K562 (cell line): ENCODE measurements at regions of chr10 and their contacts with region 1.

Region 1: GRCh38 chr10:112471878-112472487 is 25.0 kb downstream of the VTI1A start:
- DNase-seq: peak; percentile 26 to 47 (median 32)
- ATAC-seq: peak; percentile 74
- H3K4me3 ChIP-seq: no peak overlapping the region
- H3K27ac ChIP-seq: no peak overlapping the region
- H3K4me1 ChIP-seq: no peaks in the 10 kb centered on the region
- H3K27me3 ChIP-seq: no peaks in the 10 kb centered on the region
- CTCF ChIP-seq: peak; percentile 31 to 64 (median 47); a peak in 4 of 6 replicates
- EP300 ChIP-seq: no peak
- POLR2A ChIP-seq: no peak
- RAD21 ChIP-seq: peak; percentile 44 to 77; a peak in 3 of 4 replicates

Region 2: GRCh38 chr10:112314822-112315474 is 157.0 kb before region 1 on chr10:
- CTCF ChIA-PET with region 1: no interaction called
- POLR2A ChIA-PET with region 1: no interaction called
- in situ Hi-C with region 1: no loop called
- intact Hi-C with region 1: loop called (anchors 2 kb)
- DNase-seq: peak; percentile 60 to 74 (median 65)
- ATAC-seq: peak; percentile 96
- H3K4me3 ChIP-seq: no peak overlapping the region
- H3K27ac ChIP-seq: no peak overlapping the region
- H3K4me1 ChIP-seq: peaks cover 0 to 3% of the 10 kb centered on the region in 2 experiments; a peak in 1 of 5 replicates
- H3K27me3 ChIP-seq: peaks cover 8 to 19% of the 10 kb centered on the region in 2 experiments
- CTCF ChIP-seq: peak; percentile 65 to 81 (median 73)
- EP300 ChIP-seq: no peak
- POLR2A ChIP-seq: no peak
- RAD21 ChIP-seq: peak; percentile 55 to 78

Region 3: DNA sequence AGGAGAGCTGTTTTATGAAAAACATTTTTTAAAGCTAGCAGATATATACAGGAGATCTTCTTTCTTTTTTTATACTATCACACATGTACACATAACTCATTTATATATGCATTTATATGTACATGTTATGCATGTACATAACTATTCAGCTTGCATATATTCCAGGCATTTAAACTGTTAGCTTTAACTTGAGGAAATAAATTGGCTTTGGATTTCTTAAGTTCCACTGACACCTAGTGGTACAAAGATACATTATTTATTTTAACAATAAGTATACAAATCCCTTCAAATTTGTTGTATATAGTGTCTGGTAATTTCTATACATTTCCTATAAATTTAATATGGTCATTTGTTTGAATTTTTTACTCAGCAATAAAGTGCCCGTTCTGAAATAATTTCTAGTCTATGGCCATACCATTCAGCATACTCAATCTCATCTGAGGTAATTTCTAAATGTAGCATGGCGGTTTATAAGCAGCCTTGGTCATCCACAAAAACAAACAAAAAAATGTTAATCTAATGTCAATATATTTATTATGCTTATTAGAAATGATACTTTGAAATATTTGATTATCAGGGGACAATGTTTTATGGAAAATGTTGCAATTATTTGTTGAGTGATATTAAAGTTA is 36.9 kb before region 1 on chr10:
- CTCF ChIA-PET with region 1: no interaction called
- POLR2A ChIA-PET with region 1: interaction called, 3 read pairs
- in situ Hi-C with region 1: no loop called
- intact Hi-C with region 1: loop called (anchors 2 kb)
- DNase-seq: peak in 1 of 4 experiments; percentile 24
- ATAC-seq: no peak
- H3K4me3 ChIP-seq: no peak overlapping the region
- H3K27ac ChIP-seq: no peak overlapping the region
- H3K4me1 ChIP-seq: no peaks in the 10 kb centered on the region
- H3K27me3 ChIP-seq: no peaks in the 10 kb centered on the region
- CTCF ChIP-seq: peak in 1 of 3 experiments; percentile 60; a peak in 2 of 6 replicates
- EP300 ChIP-seq: no peak
- POLR2A ChIP-seq: no peak
- RAD21 ChIP-seq: peak; percentile 68 to 69

Region 4: GRCh38 chr10:113385021-113385999 is 913.3 kb after region 1 on chr10:
- CTCF ChIA-PET with region 1: no interaction called
- POLR2A ChIA-PET with region 1: no interaction called
- in situ Hi-C with region 1: no loop called
- intact Hi-C with region 1: loop called (anchors 10 kb)
- DNase-seq: peak; percentile 19 to 61 (median 38)
- ATAC-seq: peak; percentile 97
- H3K4me3 ChIP-seq: no peak overlapping the region
- H3K27ac ChIP-seq: no peak overlapping the region
- H3K4me1 ChIP-seq: no peaks in the 10 kb centered on the region
- H3K27me3 ChIP-seq: peaks cover 0 to 9% of the 10 kb centered on the region in 2 experiments; a peak in 3 of 5 replicates
- CTCF ChIP-seq: peak; percentile 63 to 75 (median 68)
- EP300 ChIP-seq: no peak
- POLR2A ChIP-seq: no peak
- RAD21 ChIP-seq: peak; percentile 76 to 81